ENCODE measurements at regions of chr12 and their contacts with region 1.

Region 1: GRCh38 chr12:87953256-87953860 is 75.8 kb downstream of the C12orf50 start:
- DNase-seq: peak; percentile 24
- H3K4me3 ChIP-seq: no peak overlapping the region
- CTCF ChIP-seq: peak; percentile 54

Region 2: GRCh38 chr12:87116780-87117179 is 836.6 kb before region 1 on chr12:
- CTCF ChIA-PET with region 1: no interaction called
- POLR2A ChIA-PET with region 1: no interaction called
- DNase-seq: no peak
- H3K4me3 ChIP-seq: no peak overlapping the region
- CTCF ChIP-seq: no peak

Region 3: DNA sequence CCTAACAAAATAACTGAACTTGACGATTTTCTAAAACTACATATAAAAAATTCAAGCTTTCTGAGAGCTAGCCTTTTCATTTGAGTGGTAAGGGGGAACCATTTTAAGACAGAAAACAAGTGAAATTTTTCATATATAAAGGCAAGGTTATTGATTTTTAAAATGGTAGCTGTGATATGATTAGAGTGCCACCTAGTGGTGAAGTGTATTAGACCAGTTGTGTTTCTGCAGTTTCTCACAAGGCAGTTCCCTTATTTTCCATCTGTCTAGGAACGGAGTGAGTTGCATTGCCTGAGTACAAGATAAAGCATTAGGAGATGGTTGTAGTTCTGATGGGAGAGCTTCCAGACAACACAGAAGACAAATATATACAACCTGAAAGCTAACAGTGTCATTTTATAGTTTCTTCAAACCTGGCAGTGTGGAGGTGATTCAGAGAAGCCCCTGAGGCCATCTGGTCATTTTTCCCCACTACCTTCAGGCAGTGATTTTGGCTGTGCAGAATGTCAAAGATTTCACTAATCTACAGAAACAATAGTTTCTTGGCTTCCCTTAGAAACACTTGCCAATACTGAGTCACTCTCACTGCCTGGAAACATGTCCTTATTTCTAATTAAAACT is 105.0 kb before region 1 on chr12:
- CTCF ChIA-PET with region 1: interaction called, 12 read pairs
- POLR2A ChIA-PET with region 1: no interaction called
- DNase-seq: peak; percentile 29
- H3K4me3 ChIP-seq: no peak overlapping the region
- CTCF ChIP-seq: peak; percentile 49

Region 4: DNA sequence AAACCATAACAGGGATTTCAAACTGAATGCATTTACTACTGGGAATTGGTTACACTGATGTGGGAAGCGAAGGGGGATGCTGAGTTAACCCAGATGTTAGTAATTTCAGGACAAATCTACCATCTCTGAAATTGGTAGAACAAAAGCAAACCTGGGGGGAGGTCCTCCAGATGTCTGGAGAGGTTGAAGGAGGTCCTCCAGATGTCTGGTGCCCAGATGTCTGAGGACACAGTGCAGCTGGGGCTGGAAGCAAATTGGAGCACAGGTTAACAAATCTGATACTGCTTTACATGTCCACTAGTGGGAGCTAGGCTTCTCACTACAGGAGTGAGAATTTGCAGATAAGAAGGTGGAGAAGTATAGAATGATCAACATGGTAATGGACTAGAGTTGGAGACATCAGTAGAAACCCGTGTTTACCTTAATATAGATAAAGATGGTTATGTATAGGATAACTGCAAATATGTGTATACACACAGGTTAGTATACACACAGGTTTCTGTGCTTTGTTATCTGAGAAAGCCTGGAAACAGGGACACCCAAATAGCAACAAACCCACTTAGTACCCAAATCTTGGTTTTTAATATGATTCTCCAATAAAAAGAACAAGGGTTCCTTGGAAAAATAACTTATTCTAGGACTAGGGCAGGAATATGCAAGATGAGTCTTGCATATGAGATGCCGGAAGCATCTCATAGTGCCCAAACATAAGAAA is 86.6 kb before region 1 on chr12:
- CTCF ChIA-PET with region 1: interaction called, 22 read pairs
- POLR2A ChIA-PET with region 1: no interaction called
- DNase-seq: no peak
- H3K4me3 ChIP-seq: no peak overlapping the region
- CTCF ChIP-seq: peak; percentile 69

Region 5: DNA sequence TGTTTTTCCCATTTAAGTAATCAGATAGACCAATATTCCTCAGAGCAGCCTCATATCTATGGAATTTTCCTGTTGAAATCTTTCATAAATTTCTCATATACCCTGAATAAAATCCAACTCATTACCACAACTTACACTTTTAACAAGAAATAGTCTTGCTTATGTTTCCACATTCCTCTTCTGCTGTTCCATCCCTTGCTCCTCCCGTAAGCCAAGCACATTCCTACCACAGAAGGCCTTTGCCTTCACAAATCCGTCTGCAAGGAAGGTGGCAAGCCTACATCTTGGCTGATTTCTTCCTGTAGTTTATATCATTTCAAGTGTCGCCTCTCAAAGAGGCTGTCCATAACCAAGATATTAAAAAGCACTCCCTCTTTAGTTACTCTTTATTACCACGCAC is 51.9 kb before region 1 on chr12:
- CTCF ChIA-PET with region 1: no interaction called
- POLR2A ChIA-PET with region 1: no interaction called
- DNase-seq: no peak
- H3K4me3 ChIP-seq: no peak overlapping the region
- CTCF ChIP-seq: no peak

Region 6: GRCh38 chr12:88035271-88035906 is 82.0 kb after region 1 on chr12:
- CTCF ChIA-PET with region 1: no interaction called
- POLR2A ChIA-PET with region 1: no interaction called
- DNase-seq: no peak
- H3K4me3 ChIP-seq: peak overlapping the region; percentile 88
- CTCF ChIP-seq: no peak

Measured in AG04449 (cell line).